CD8-positive, alpha-beta T cell (primary cell): ENCODE measurements at regions of chr9 and their contacts with region 1.

Region 1: DNA sequence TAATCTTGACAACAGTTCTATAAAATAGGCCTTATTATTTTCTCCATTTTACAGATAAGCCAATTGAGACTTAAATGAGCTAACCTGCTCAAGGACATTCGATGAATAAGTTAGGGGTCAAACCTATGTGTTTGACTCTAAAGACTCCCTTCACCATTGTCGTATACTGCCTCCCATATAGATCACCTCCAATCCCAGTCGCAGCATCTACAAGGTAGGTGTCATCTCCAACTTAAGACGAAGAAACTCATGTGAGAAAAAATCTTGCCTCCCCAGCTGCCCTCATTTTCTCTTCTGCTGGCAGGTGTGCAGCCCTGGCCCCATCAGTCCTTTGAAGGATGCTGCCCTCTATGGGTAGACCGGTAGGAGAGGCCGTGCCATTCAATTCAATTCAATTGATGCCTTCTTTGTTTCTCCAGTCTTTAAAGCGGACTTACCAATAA is 75.2 kb upstream of the SMARCA2 start:
- DNase-seq: peak in 4 of 9 experiments; percentile 8 to 51 (median 30)
- ATAC-seq: peak; percentile 51
- H3K4me3 ChIP-seq: no peak overlapping the region
- H3K4me3 Mint-ChIP-seq: no peak overlapping the region
- H3K27ac ChIP-seq: no peak overlapping the region
- H3K27ac Mint-ChIP-seq: no peak overlapping the region
- H3K4me1 ChIP-seq: no peaks in the 10 kb centered on the region
- H3K4me1 Mint-ChIP-seq: peaks cover 2% of the 10 kb centered on the region
- H3K27me3 ChIP-seq: no peaks in the 10 kb centered on the region
- H3K27me3 Mint-ChIP-seq: peaks cover 5% of the 10 kb centered on the region
- CTCF ChIP-seq: peak; percentile 37

Region 2: DNA sequence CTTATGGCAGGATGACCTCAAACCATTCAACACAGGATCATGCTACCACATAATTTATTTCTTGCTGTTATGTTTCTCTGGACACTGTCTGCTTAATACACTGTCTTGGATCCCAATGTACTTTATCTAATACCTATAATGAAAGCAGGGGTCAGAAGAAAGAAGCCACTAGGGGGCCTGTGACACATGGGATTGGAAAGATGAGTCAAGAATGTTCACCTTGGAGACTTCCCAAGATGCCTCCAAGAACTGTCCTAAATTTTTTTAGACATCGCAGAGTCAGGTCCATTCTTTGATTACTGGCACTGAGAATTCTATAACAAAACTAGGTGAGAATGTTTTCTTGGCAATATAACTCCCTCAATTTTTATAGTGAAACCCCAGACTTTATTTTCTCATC is 230.6 kb before region 1 on chr9:
- CTCF ChIA-PET with region 1: no interaction called
- POLR2A ChIA-PET with region 1: no interaction called
- intact Hi-C with region 1: loop called in 1 of 2 experiments (anchors 2 kb)
- DNase-seq: peak in 2 of 9 experiments; percentile 19 to 37
- ATAC-seq: no peak
- H3K4me3 ChIP-seq: no peak overlapping the region
- H3K4me3 Mint-ChIP-seq: no peak overlapping the region
- H3K27ac ChIP-seq: no peak overlapping the region
- H3K27ac Mint-ChIP-seq: no peak overlapping the region
- H3K4me1 ChIP-seq: no peaks in the 10 kb centered on the region
- H3K4me1 Mint-ChIP-seq: no peaks in the 10 kb centered on the region
- H3K27me3 ChIP-seq: no peaks in the 10 kb centered on the region
- H3K27me3 Mint-ChIP-seq: peaks cover 15% of the 10 kb centered on the region
- CTCF ChIP-seq: no peak